Dendritic cell treated with granulocyte-macrophage colony-stimulating factor and Interleukin-4, amounts not matched to agents 40 ng/mL and 50 ng/mL, for 4 days (primary cell): ENCODE measurements at regions of chr5 and their contacts with region 1.

Region 1: GRCh38 chr5:43019614-43020293 is 20.4 kb downstream of the ANXA2R start:
- H3K4me3 Mint-ChIP-seq: peak overlapping the region; percentile 89
- H3K27ac Mint-ChIP-seq: peak overlapping the region; percentile 99
- H3K4me1 Mint-ChIP-seq: peaks cover 37% of the 10 kb centered on the region
- H3K27me3 Mint-ChIP-seq: no peaks in the 10 kb centered on the region

Region 2: DNA sequence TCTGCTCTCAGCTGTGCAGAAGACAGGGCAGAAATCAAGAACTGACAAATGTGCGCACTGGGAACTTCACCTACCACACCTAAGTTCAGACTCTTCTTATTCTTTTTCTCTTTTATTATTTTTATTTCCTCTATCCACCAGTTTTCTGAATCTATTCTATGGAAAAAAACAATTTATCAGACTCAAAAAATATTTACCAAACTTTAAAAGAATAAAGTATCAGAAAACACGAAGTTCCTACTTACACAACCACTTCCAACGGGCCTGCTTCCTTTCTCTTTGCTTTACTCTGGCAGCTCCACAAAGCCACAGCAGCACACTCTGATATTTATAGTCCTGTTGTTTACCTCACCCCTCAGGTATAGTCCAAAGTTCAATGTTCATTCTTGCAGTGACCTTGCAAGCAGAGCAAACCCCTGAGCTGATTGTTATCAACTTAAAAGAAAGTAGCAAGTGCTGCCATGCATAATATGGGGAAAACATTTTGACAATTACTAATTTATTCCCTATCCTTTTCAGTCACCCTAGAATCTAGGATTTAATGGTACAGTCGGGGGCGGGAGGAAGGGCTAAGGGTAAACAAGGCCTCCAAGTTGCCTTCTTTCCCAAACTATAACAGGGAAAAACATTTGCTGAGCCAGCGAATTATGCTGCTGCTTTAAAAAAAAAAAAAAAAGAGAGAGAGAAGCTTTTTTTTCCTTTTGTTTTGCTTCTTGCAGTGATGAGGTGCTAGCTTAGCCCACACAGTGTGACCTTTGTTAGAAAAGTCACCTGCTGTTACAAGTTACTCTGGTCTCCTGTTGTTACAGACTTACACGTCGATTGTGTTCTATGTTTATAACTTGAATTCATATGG is 207.9 kb before region 1 on chr5 and contains the start of gene SELENOP:
- intact Hi-C with region 1: no loop called
- H3K4me3 Mint-ChIP-seq: peak within 1 kb of the TSS; percentile 79
- H3K27ac Mint-ChIP-seq: peak within 1 kb of the TSS; percentile 78
- H3K4me1 Mint-ChIP-seq: peaks cover 10% of the 10 kb centered on the region
- H3K27me3 Mint-ChIP-seq: no peaks in the 10 kb centered on the region

Region 3: DNA sequence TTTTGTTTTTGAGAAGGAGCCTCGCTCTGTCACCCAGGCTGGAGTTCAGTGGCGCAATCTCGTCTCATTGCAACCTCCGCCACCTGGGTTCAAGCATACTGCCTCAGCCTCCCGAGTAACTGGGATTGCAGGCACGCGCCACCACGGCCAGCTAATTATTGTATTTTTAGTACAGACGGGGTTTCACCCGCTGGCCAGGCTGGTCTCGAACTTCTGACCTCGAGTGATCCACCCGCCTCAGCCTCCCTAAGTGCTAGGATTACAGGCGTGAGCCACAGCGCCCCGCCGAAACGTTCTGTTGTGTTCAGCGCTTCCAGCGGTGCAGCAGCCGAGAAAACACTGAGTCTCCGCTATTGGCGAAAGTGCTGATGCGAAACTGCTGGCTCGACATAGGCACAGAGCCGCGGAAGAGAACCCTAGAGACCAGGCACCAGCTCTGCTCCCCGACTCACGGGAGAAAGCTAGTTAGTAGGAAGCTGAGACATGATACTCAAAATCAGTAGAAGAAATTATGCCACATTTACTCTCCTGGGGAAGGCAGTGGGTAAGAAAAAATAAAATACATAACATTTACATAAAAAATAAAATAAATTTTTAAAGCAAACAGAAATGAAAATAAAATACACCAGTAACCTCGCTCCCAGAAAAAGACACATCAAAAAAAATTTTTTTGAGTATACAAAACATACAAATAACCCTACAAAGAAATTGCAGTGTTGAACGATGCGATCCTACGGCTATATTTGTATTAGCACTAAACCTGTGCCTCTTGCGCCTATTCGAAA is 11.2 kb before region 1 on chr5:
- intact Hi-C with region 1: loop called (anchors 1 kb)
- H3K4me3 Mint-ChIP-seq: peak overlapping the region; percentile 82
- H3K27ac Mint-ChIP-seq: peak overlapping the region; percentile 98
- H3K4me1 Mint-ChIP-seq: peaks cover 39% of the 10 kb centered on the region
- H3K27me3 Mint-ChIP-seq: no peaks in the 10 kb centered on the region

Region 4: DNA sequence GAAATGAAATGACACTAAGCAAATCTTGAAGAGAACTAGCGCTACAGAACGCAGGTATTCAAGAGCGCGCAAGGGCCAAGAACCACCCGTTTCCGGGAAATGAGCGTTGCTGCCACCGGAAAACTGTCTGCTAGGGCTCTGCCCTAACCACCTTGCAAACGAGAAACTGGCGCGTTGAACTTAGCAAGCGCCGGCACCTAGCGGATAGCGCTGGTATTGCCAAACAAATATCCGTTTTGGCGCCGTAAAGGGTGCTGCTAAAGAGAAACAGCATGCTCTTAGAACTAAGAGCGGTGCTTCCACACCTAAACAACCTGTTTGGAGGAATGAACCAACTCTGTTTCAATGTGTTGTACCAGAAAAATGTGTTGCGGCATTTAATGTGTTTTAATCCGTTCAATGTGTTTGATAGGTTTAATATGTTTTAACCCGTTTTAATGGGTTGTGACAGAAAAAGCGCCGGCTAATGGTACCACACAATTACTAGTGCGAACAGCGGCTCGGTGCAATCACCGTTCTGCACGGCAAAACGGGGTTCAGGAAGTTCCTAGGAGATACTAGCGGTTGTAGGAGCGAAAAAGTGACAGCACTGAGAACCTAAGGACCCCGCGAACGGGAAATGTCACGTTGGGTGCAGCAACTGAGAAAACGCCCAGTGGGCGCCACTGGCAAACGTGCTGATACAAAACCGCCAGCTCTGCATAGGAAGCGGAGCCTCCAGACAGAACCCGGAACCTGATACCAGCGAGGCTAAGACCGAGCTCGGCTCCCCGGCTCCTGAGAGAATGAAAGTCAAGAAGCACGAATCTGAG is 20.7 kb after region 1 on chr5 and contains the start of gene ANXA2R:
- intact Hi-C with region 1: loop called (anchors 1 kb)
- H3K4me3 Mint-ChIP-seq: peak within 1 kb of the TSS; percentile 88
- H3K27ac Mint-ChIP-seq: peak within 1 kb of the TSS; percentile 100
- H3K4me1 Mint-ChIP-seq: peaks cover 43% of the 10 kb centered on the region
- H3K27me3 Mint-ChIP-seq: no peaks in the 10 kb centered on the region